Natural killer cell (primary cell): ENCODE measurements at regions of chr14 and their contacts with region 1.

Region 1: DNA sequence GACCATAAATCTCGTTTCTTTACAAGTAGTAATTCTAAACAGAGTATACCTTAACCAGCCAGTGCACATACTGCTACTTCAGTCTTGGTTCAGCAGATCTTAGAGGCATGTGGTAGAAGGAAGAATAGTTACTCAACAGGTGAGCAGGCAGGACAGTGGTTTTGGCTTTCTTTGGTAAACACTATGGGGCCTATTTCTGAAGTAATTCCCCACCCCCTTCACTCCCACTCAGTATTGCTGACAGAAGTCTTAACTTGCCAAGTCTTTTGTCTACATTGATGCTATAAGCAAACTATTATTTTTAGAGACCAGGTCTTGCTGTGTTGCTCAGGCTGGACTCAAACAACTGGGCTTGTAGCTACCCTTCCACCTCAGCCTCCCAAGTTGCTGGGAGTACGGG is 68.5 kb downstream of the FBXO34 start:
- DNase-seq: peak in 1 of 2 donors; percentile 29
- ATAC-seq: no peak
- H3K4me3 ChIP-seq: no peak overlapping the region
- H3K4me3 Mint-ChIP-seq: no peak overlapping the region
- H3K27ac ChIP-seq: peak overlapping the region; percentile 24
- H3K27ac Mint-ChIP-seq: peak overlapping the region; percentile 70 to 91
- H3K4me1 ChIP-seq: peaks cover 39% of the 10 kb centered on the region
- H3K4me1 Mint-ChIP-seq: peaks cover 73 to 82% of the 10 kb centered on the region in 2 donors
- H3K27me3 ChIP-seq: no peaks in the 10 kb centered on the region
- H3K27me3 Mint-ChIP-seq: no peaks in the 10 kb centered on the region
- CTCF ChIP-seq: no peak

Region 2: GRCh38 chr14:55026793-55027561 is 312.8 kb before region 1 on chr14 and contains the starts of genes SOCS4 and WDHD1:
- intact Hi-C with region 1: no loop called
- DNase-seq: peak; percentile 96 to 98
- ATAC-seq: peak; percentile 92 to 97 (median 94)
- H3K4me3 ChIP-seq: peak within 1 kb of the TSS; percentile 83
- H3K4me3 Mint-ChIP-seq: peak within 1 kb of the TSS; percentile 94
- H3K27ac ChIP-seq: peak within 1 kb of the TSS; percentile 85
- H3K27ac Mint-ChIP-seq: peak within 1 kb of the TSS; percentile 92 to 93
- H3K4me1 ChIP-seq: no peaks in the 10 kb centered on the region
- H3K4me1 Mint-ChIP-seq: peaks cover 32 to 36% of the 10 kb centered on the region in 2 donors
- H3K27me3 ChIP-seq: no peaks in the 10 kb centered on the region
- H3K27me3 Mint-ChIP-seq: no peaks in the 10 kb centered on the region
- CTCF ChIP-seq: no peak
- total RNA-seq, gene SOCS4: 17.6 to 21.9 (median 21.9) TPM
- total RNA-seq, gene WDHD1: 4.5 to 5.4 (median 5.3) TPM

Region 3: DNA sequence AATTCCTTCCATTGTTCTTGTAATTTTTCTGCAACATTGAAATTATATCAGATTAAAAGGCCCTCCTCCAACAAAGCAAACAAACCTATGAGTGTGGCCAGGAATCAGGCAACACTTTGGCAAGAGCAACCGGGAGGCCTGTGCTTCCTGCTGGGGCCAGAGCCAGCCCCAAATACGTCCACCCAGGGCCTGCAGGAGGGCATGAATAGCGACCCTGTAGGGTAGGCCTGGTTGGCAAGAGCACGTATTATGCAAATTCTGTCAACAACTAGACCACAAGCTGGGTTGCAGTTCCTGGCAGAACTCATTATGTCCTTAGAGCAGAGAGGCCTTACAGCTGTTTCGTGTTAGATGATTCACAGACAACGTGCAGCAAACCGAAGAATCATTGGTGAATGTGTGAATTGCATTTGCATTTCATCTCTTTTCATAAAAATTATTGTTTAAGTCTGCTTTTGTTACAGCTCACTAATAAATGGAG is 237.6 kb before region 1 on chr14:
- intact Hi-C with region 1: loop called (anchors 5 kb)
- DNase-seq: peak; percentile 53 to 75
- ATAC-seq: peak; percentile 84 to 89 (median 88)
- H3K4me3 ChIP-seq: no peak overlapping the region
- H3K4me3 Mint-ChIP-seq: peak overlapping the region; percentile 75
- H3K27ac ChIP-seq: peak overlapping the region; percentile 87
- H3K27ac Mint-ChIP-seq: peak overlapping the region; percentile 95 to 99
- H3K4me1 ChIP-seq: peaks cover 46% of the 10 kb centered on the region
- H3K4me1 Mint-ChIP-seq: peaks cover 36 to 42% of the 10 kb centered on the region in 2 donors
- H3K27me3 ChIP-seq: no peaks in the 10 kb centered on the region
- H3K27me3 Mint-ChIP-seq: no peaks in the 10 kb centered on the region
- CTCF ChIP-seq: no peak